K562 (cell line): ENCODE measurements at regions of chr5 and their contacts with region 1.

Region 1: GRCh38 chr5:75681125-75681830 is 36.0 kb downstream of the POC5 start:
- DNase-seq: peak in 1 of 4 experiments; percentile 53
- ATAC-seq: peak; percentile 53; the same call in 1 of the 3 replicates
- H3K4me3 ChIP-seq: no peak overlapping the region
- H3K27ac ChIP-seq: no peak overlapping the region
- H3K4me1 ChIP-seq: no peaks in the 10 kb centered on the region
- H3K27me3 ChIP-seq: no peaks in the 10 kb centered on the region
- CTCF ChIP-seq: peak in 2 of 3 experiments; percentile 32 to 68; a peak in 4 of 6 replicates
- EP300 ChIP-seq: no peak
- POLR2A ChIP-seq: no peak
- RAD21 ChIP-seq: peak; percentile 67 to 70

Region 2: DNA sequence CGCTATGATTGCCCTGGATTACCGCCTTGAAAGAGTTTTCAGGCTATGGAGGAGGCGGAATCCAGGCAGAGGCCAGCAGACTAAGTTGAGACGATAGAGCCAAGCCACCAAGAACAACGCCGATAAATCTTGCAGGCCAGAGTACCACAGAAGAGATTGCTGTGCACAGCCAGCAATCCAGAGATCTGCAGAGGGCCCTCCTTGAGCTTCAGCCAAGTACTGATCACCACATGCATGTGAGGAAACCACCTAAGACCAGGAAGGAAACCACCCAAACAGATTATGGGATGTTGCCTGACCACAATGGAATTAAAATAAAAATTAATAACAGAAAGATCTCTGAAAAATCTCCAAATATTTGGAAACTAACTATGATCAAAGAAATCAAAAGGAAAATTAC is 703.8 kb before region 1 on chr5:
- CTCF ChIA-PET with region 1: no interaction called
- POLR2A ChIA-PET with region 1: no interaction called
- in situ Hi-C with region 1: no loop called
- intact Hi-C with region 1: no loop called
- DNase-seq: no peak
- ATAC-seq: no peak
- H3K4me3 ChIP-seq: no peak overlapping the region
- H3K27ac ChIP-seq: no peak overlapping the region
- H3K4me1 ChIP-seq: no peaks in the 10 kb centered on the region
- H3K27me3 ChIP-seq: no peaks in the 10 kb centered on the region
- CTCF ChIP-seq: no peak
- EP300 ChIP-seq: no peak
- POLR2A ChIP-seq: no peak
- RAD21 ChIP-seq: no peak

Region 3: GRCh38 chr5:75694781-75695180 is 13.5 kb after region 1 on chr5:
- CTCF ChIA-PET with region 1: no interaction called
- POLR2A ChIA-PET with region 1: interaction called, 17 read pairs
- in situ Hi-C with region 1: no loop called
- intact Hi-C with region 1: no loop called
- DNase-seq: no peak
- ATAC-seq: no peak
- H3K4me3 ChIP-seq: no peak overlapping the region
- H3K27ac ChIP-seq: no peak overlapping the region
- H3K4me1 ChIP-seq: no peaks in the 10 kb centered on the region; a peak in 1 of 5 replicates
- H3K27me3 ChIP-seq: no peaks in the 10 kb centered on the region
- CTCF ChIP-seq: no peak
- EP300 ChIP-seq: no peak
- POLR2A ChIP-seq: no peak
- RAD21 ChIP-seq: no peak

Region 4: GRCh38 chr5:76269932-76270610 is 588.8 kb after region 1 on chr5:
- CTCF ChIA-PET with region 1: no interaction called
- POLR2A ChIA-PET with region 1: no interaction called
- in situ Hi-C with region 1: no loop called
- intact Hi-C with region 1: no loop called
- DNase-seq: no peak
- ATAC-seq: no peak
- H3K4me3 ChIP-seq: no peak overlapping the region
- H3K27ac ChIP-seq: no peak overlapping the region
- H3K4me1 ChIP-seq: no peaks in the 10 kb centered on the region; a peak in 1 of 5 replicates
- H3K27me3 ChIP-seq: peaks cover 20 to 24% of the 10 kb centered on the region in 2 experiments
- CTCF ChIP-seq: no peak
- EP300 ChIP-seq: no peak
- POLR2A ChIP-seq: no peak
- RAD21 ChIP-seq: no peak